ENCODE measurements at regions of chr19 and their contacts with region 1.

Region 1: GRCh38 chr19:12789904-12790619 is 1.2 kb upstream of the JUNB start:
- DNase-seq: peak; percentile 99
- ATAC-seq: peak; percentile 68

Region 2: GRCh38 chr19:12736995-12737834 is 52.8 kb before region 1 on chr19 and contains the start of gene GET3:
- intact Hi-C with region 1: loop called (anchors 2 kb)
- DNase-seq: peak; percentile 91
- ATAC-seq: peak; percentile 94
- total RNA-seq, gene GET3: 65.8 TPM